ENCODE measurements at regions of chr10 and their contacts with region 1.

Region 1: DNA sequence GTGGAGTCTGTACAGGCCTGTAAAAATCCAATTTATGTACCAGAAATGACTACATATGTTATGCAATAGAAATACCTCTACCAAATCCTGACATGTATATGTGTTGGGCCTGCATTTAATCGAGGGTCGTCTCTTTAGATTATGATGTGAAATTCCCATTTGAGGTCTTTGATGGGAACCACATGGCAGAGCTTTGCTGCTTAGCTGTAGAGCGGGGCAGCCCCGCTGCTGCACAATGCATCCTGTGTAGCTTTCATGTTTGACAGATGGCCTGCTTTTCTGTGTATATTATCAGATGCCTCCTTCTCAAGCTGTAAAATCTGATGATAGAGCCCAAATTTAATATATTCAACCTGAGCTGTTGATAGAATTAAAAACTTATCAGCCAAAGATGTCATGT is 65.8 kb downstream of the RAB18 start:
- DNase-seq: no peak

Region 2: DNA sequence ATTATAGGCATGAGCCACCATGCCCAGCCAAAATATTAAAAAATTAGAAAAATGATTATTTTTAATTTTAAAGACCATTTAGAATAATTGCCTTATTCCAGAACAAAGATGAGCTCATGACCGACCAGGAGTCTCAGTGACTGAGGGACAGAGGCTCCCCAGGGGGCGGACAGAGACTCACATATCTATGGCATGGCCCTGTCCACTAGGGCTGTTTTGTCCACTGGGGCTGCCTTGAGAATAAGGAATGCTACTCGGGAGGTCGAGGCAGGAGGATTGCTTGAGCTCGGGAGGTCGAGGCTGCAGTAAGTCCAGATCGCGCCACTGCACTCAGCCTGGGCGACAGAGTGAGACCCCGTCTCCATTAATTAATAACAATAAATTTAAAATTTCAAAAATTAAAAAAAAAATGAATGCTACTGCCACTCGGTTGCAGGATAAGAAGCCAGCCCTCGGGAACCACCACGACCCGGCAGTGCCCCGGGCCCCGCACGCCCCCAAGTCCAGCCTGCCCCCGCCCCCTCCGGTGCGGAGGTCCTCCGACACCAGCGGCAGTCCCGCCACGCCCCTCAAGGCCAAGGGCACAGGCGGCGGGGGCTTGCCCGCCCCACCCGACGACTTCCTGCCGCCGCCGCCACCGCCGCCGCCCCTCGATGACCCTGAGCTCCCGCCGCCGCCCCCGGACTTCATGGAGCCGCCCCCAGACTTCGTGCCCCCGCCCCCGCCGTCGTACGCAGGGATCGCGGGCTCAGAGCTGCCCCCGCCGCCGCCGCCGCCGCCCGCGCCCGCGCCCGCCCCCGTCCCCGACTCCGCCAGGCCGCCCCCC is 1003.2 kb before region 1 on chr10:
- intact Hi-C with region 1: no loop called
- DNase-seq: no peak

Region 3: GRCh38 chr10:27035163-27035562 is 534.8 kb before region 1 on chr10:
- intact Hi-C with region 1: loop called in 1 of 2 experiments (anchors 5 kb)
- DNase-seq: no peak

Region 4: GRCh38 chr10:27558612-27559020 is 11.3 kb before region 1 on chr10:
- intact Hi-C with region 1: no loop called
- DNase-seq: no peak